CD14-positive monocyte (primary cell): ENCODE measurements at regions of chr17 and their contacts with region 1.

Region 1: GRCh38 chr17:7803981-7804380 is 30.0 kb upstream of the KDM6B start:
- DNase-seq: no peak
- H3K4me3 ChIP-seq: no peak overlapping the region
- H3K4me3 Mint-ChIP-seq: peak overlapping the region in 1 of 2 donors; percentile 21
- H3K27ac ChIP-seq: no peak overlapping the region
- H3K27ac Mint-ChIP-seq: no peak overlapping the region
- H3K4me1 ChIP-seq: peaks cover 8 to 10% of the 10 kb centered on the region in 2 donors
- H3K4me1 Mint-ChIP-seq: peaks cover 6% of the 10 kb centered on the region
- H3K27me3 ChIP-seq: no peaks in the 10 kb centered on the region
- H3K27me3 Mint-ChIP-seq: peaks cover 5 to 10% (median 9%) of the 10 kb centered on the region in 3 donors
- CTCF ChIP-seq: no peak

Region 2: GRCh38 chr17:7755095-7755890 is 48.7 kb before region 1 on chr17:
- intact Hi-C with region 1: loop called in 1 of 2 experiments (anchors 5 kb)
- DNase-seq: no peak
- H3K4me3 ChIP-seq: no peak overlapping the region
- H3K4me3 Mint-ChIP-seq: peak overlapping the region in 1 of 2 donors; percentile 13
- H3K27ac ChIP-seq: no peak overlapping the region
- H3K27ac Mint-ChIP-seq: no peak overlapping the region
- H3K4me1 ChIP-seq: peaks cover 0 to 6% of the 10 kb centered on the region in 2 donors
- H3K4me1 Mint-ChIP-seq: peaks cover 6% of the 10 kb centered on the region
- H3K27me3 ChIP-seq: no peaks in the 10 kb centered on the region
- H3K27me3 Mint-ChIP-seq: peaks cover 0 to 15% (median 3%) of the 10 kb centered on the region in 3 donors
- CTCF ChIP-seq: no peak